ENCODE measurements at regions of chr10 and their contacts with region 1.

Region 1: GRCh38 chr10:101291331-101292193 is 62.3 kb upstream of the LBX1 start:
- DNase-seq: peak; percentile 44 to 64 (median 57)
- H3K4me3 ChIP-seq: peak overlapping the region in 4 of 7 experiments; percentile 46 to 68 (median 56)
- H3K27ac ChIP-seq: no peak overlapping the region
- H3K4me1 ChIP-seq: peaks cover 0 to 20% (median 16%) of the 10 kb centered on the region in 4 experiments
- H3K27me3 ChIP-seq: peaks cover 21 to 100% (median 55%) of the 10 kb centered on the region in 5 experiments

Region 2: GRCh38 chr10:101246639-101247038 is 44.9 kb before region 1 on chr10:
- CTCF ChIA-PET with region 1: no interaction called
- POLR2A ChIA-PET with region 1: no interaction called
- DNase-seq: no peak
- H3K4me3 ChIP-seq: no peak overlapping the region
- H3K27ac ChIP-seq: no peak overlapping the region
- H3K4me1 ChIP-seq: no peaks in the 10 kb centered on the region
- H3K27me3 ChIP-seq: peaks cover 8 to 98% (median 27%) of the 10 kb centered on the region in 5 experiments

Region 3: GRCh38 chr10:101272229-101272868 is 19.2 kb before region 1 on chr10:
- CTCF ChIA-PET with region 1: interaction called, 62 read pairs
- POLR2A ChIA-PET with region 1: no interaction called
- DNase-seq: peak; percentile 56 to 76 (median 63)
- H3K4me3 ChIP-seq: no peak overlapping the region
- H3K27ac ChIP-seq: no peak overlapping the region
- H3K4me1 ChIP-seq: no peaks in the 10 kb centered on the region
- H3K27me3 ChIP-seq: peaks cover 3 to 46% (median 22%) of the 10 kb centered on the region in 5 experiments

Region 4: DNA sequence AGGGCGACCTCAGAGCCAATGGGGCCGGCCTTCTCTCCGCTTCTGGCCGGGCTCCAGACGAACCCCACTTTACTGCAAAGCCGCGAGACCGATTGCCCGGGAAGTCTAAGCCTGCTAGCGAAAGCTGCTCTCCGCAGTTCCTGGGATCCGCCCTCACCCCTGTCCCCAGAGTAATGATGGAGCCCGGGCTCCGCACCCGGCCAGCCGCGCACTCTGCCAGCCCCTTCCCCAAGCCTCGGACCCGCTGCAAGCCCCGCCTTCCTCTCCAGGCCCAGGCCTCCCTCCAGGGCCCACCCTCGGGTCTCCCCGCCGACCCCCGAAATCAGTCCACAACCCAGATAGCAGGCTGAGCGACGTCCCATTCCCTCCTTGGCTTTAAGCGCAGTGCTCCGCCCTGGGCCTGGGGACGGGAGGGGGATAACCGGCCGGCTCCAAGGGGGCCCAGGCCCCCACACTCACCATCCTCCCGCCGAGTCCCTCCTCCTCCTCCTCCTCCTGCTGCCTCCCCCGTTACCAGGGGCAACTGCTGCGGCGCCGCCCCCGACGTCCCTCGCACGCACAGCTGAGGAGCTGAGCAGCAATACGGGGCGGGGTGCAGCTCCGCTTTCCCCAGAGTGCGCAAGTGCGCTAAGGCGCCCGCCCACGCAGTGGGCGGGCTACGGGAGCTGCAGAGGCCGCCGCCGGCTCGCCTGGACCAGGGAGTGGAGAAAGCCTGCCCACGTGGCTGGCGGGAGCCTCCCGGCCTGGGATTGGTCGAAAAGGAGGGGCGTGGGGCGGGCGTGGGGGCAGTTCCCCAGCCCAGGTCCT is 1422.5 kb after region 1 on chr10 and contains the start of gene ARL3:
- CTCF ChIA-PET with region 1: no interaction called
- POLR2A ChIA-PET with region 1: no interaction called
- DNase-seq: peak; percentile 97 to 99 (median 99)
- H3K4me3 ChIP-seq: peak within 1 kb of the TSS; percentile 84 to 100 (median 96)
- H3K27ac ChIP-seq: peak within 1 kb of the TSS; percentile 90 to 97
- H3K4me1 ChIP-seq: peaks cover 8 to 55% (median 28%) of the 10 kb centered on the region in 4 experiments
- H3K27me3 ChIP-seq: no peaks in the 10 kb centered on the region